ENCODE measurements at regions of chr1 and their contacts with region 1.

Region 1: DNA sequence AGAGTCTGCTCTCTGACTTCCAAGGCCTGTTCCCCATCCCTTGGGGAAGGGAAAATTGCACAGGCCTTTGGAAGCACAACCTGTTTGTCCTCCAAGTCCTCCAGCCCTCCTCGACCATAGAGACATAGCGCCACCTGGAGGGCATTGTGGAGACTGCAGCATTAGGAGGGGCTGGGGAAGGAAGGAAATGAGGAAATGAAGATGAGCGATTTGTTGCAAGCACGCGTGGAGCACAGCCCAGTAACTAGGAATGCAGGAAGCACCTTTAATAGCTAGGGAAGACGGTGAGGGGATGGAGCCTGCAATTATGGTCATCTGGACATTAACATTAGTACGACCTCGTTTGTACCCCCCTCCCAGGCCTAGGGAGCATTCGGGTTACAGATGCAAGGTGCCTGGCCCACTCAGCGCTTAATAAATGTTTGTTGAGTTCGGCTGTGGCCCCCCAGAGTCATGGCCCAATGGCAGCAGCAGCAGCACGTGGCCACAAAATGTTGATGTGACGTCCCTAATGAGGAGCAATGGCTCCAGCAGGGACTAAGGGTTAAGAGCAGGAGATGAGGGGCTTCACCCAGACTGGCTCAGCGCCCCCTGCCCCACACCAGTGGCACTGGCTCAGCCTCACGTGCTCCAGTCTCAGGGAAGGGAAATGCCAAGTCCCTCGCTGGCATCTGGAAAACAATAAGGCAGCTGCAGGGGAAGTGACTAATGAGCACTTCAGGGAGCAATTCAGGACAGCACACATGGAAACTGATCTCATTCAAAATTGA is 8.0 kb upstream of the CAMK2N1 start:
- DNase-seq: peak; percentile 89
- ATAC-seq: peak; percentile 93
- H3K4me3 ChIP-seq: no peak overlapping the region
- H3K27ac ChIP-seq: peak overlapping the region; percentile 51
- H3K4me1 ChIP-seq: peaks cover 15% of the 10 kb centered on the region
- H3K27me3 ChIP-seq: no peaks in the 10 kb centered on the region
- CTCF ChIP-seq: peak; percentile 97

Region 2: GRCh38 chr1:20212685-20213331 is 281.2 kb before region 1 on chr1:
- intact Hi-C with region 1: loop called (anchors 5 kb)
- DNase-seq: peak; percentile 85
- ATAC-seq: peak; percentile 92
- H3K4me3 ChIP-seq: no peak overlapping the region
- H3K27ac ChIP-seq: no peak overlapping the region
- H3K4me1 ChIP-seq: peaks cover 9% of the 10 kb centered on the region
- H3K27me3 ChIP-seq: peaks cover 10% of the 10 kb centered on the region
- CTCF ChIP-seq: peak; percentile 81

Region 3: GRCh38 chr1:20290624-20291597 is 203.1 kb before region 1 on chr1 and contains the start of gene VWA5B1:
- intact Hi-C with region 1: no loop called
- DNase-seq: no peak
- ATAC-seq: peak; percentile 8
- H3K4me3 ChIP-seq: no peak within 1 kb of the TSS
- H3K27ac ChIP-seq: no peak within 1 kb of the TSS
- H3K4me1 ChIP-seq: no peaks in the 10 kb centered on the region
- H3K27me3 ChIP-seq: peaks cover 42% of the 10 kb centered on the region
- CTCF ChIP-seq: no peak
- total RNA-seq, gene VWA5B1: 0.09 TPM

Region 4: GRCh38 chr1:20376880-20377494 is 117.0 kb before region 1 on chr1:
- intact Hi-C with region 1: loop called (anchors 10 kb)
- DNase-seq: no peak
- ATAC-seq: peak; percentile 78
- H3K4me3 ChIP-seq: no peak overlapping the region
- H3K27ac ChIP-seq: no peak overlapping the region
- H3K4me1 ChIP-seq: no peaks in the 10 kb centered on the region
- H3K27me3 ChIP-seq: peaks cover 27% of the 10 kb centered on the region
- CTCF ChIP-seq: peak; percentile 77

Region 5: DNA sequence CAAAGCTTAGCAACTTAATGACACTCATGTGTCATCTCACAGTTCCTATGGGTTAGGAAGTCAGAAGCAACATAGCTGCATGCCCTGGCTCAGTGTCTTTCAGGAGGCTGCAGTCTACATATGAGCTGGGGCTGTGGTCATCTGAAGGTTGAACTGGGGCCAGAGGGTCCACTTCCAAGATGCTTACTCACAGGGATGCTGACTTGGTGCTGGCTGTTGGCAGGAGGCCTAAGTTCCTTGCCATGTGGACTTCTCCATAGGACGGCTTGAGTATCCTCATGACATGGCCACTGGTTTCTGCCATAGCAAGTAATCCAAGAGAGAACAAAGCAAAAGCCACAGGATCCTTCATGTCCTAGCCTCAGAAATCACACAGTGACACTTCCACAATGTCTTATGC is 46.3 kb after region 1 on chr1:
- intact Hi-C with region 1: no loop called
- DNase-seq: no peak
- ATAC-seq: no peak
- H3K4me3 ChIP-seq: no peak overlapping the region
- H3K27ac ChIP-seq: no peak overlapping the region
- H3K4me1 ChIP-seq: no peaks in the 10 kb centered on the region
- H3K27me3 ChIP-seq: peaks cover 34% of the 10 kb centered on the region
- CTCF ChIP-seq: no peak

Region 6: DNA sequence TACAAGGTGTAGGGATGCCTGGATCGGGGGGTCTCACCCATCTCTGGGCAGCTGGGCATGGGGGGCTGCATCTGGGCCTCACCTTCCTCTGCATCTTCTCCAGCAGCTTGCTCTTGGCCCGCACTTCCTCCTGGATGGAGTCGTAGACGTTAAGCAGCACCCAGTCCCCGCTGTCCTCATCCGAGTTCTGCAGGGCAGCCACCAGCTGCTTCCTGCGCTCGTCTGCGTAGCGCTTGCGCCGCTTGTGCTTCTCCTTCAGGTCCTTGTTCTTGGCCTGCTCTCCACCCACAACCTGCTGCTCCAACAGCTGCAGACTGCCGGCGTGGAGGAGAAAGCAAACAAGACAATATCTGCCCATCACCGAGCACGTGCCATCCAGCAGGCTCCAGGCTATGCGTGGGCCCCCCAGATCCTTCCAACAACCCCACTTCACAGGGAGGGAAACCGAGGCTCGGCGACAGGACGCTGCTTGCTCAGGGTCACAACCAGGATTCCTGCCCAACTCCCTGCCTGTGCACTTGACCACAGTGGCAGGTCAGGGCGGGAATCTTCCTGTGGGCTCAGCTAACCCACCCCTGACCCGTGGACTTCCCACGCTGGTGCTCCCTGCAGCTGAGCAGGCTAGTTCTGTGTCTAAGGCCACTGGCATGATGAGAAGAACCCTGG is 188.7 kb after region 1 on chr1:
- intact Hi-C with region 1: no loop called
- DNase-seq: no peak
- ATAC-seq: peak; percentile 12
- H3K4me3 ChIP-seq: no peak overlapping the region
- H3K27ac ChIP-seq: no peak overlapping the region
- H3K4me1 ChIP-seq: no peaks in the 10 kb centered on the region
- H3K27me3 ChIP-seq: no peaks in the 10 kb centered on the region
- CTCF ChIP-seq: no peak

Region 7: DNA sequence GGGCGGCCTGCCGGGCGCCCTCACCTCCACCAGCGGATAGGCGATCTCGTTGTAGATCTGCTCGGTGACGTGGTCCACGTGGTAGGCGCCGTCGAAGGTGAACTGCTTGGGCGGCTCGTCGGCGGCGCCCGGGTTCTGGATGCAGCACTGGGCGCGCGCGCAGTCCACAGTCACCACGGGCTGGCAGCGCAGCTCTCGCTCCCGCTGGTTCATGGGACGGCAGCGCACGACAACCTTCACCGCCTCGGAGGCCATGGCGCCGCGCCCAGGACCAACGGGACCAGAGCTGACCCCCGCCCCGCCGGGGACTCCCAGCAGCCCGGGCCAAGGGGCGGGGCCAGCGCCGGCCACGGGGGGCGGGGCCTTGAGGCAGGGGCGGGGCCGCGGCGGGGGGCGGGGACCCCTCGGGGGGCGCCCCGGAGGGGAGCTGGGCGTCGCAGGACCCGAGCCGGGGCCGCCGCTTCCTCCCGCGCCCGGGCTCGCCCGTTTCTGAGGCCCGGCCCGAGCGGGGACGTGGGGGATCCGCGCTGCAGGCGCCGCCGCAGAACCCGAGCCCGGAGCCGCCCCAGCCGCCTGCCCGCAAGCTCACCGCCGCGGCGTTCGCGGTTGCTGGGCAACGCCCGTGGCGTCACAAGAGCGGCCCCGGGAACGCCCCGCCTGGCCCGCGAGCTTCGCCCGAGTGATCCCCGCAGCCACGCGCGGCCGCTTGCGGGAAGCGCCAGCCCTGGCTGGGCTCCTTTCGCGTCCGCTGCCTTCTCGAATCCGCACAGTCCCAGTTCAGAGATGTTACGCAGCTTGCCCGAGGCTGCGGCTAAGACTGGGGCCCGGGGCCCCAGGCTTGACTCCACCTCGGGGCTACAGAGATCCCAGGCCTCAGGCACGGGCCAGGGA is 223.7 kb after region 1 on chr1 and contains the start of gene KIF17:
- intact Hi-C with region 1: no loop called
- DNase-seq: peak; percentile 89
- ATAC-seq: peak; percentile 85
- H3K4me3 ChIP-seq: peak within 1 kb of the TSS; percentile 44
- H3K27ac ChIP-seq: no peak within 1 kb of the TSS
- H3K4me1 ChIP-seq: peaks cover 4% of the 10 kb centered on the region
- H3K27me3 ChIP-seq: peaks cover 24% of the 10 kb centered on the region
- CTCF ChIP-seq: no peak
- total RNA-seq, gene KIF17: 4.6 TPM